ENCODE measurements at regions of chr15 and their contacts with region 1.

Region 1: GRCh38 chr15:66851226-66852071 is 149.4 kb downstream of the SMAD6 start:
- DNase-seq: peak; percentile 70
- ATAC-seq: peak; percentile 96
- H3K4me3 ChIP-seq: no peak overlapping the region
- H3K27ac ChIP-seq: peak overlapping the region; percentile 51
- H3K4me1 ChIP-seq: peaks cover 11% of the 10 kb centered on the region
- H3K27me3 ChIP-seq: no peaks in the 10 kb centered on the region
- CTCF ChIP-seq: peak; percentile 90
- POLR2A ChIP-seq: no peak
- RAD21 ChIP-seq: peak; percentile 92

Region 2: DNA sequence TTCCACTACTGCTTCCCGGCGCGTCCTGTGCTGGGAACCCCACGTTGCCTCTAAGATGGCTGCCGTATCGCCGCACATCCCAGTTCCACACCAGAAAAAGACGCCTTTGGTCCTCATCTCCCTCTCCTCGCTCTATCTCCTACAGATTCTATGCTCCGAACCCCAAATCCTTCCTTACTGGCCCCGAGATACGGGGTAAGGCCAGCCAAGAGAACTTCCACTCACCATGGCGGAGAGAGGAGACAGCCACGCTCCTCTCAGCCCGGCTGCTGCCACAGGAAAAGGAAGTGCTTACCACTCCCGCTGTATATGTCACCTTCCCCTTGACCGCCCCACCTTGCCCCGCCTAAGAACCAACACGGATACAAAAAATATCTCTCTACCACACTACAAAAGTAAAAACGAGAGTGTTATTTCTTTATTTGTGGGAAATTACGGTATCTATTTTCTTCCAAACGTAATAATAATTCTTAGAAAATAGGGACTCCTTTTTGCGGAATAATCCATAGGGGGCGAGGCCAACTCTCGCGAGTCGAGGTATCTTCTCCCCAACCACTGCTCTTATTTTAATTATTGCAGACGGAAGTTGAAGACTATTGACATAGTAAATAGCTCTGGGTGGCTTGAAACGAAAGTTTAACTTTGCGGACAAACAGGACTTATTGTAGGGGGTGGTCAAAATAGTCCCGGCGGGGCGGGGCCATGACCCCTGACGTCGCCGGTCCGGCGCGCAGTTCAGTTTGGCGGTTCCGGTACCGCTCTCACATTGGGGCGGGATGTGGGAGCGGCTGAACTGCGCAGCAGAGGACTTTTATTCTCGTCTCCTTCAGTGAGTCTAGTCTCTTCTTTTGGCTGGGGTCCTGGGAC is 346.7 kb before region 1 on chr15 and contains the starts of genes RPL4 and ZWILCH:
- CTCF ChIA-PET with region 1: no interaction called
- POLR2A ChIA-PET with region 1: no interaction called
- dilution Hi-C with region 1: no loop called
- in situ Hi-C with region 1: no loop called
- intact Hi-C with region 1: loop called (anchors 1 kb)
- DNase-seq: peak; percentile 87
- ATAC-seq: peak; percentile 87
- H3K4me3 ChIP-seq: peak within 1 kb of the TSS; percentile 59
- H3K27ac ChIP-seq: peak within 1 kb of the TSS; percentile 95
- H3K4me1 ChIP-seq: peaks cover 1% of the 10 kb centered on the region; the same call in 1 of the 2 replicates
- H3K27me3 ChIP-seq: no peaks in the 10 kb centered on the region
- CTCF ChIP-seq: no peak
- POLR2A ChIP-seq: peak; percentile 98
- RAD21 ChIP-seq: no peak
- total RNA-seq, gene RPL4: 6,510 and 13,244 TPM in 2 replicates
- total RNA-seq, gene ZWILCH: 22.2 and 28.1 TPM in 2 replicates

Region 3: GRCh38 chr15:66619151-66619903 is 232.1 kb before region 1 on chr15:
- CTCF ChIA-PET with region 1: interaction called, 11 read pairs
- POLR2A ChIA-PET with region 1: no interaction called
- dilution Hi-C with region 1: no loop called
- in situ Hi-C with region 1: no loop called
- intact Hi-C with region 1: loop called (anchors 1 kb)
- DNase-seq: peak; percentile 68
- ATAC-seq: peak; percentile 92
- H3K4me3 ChIP-seq: no peak overlapping the region
- H3K27ac ChIP-seq: no peak overlapping the region
- H3K4me1 ChIP-seq: peaks cover 15% of the 10 kb centered on the region
- H3K27me3 ChIP-seq: no peaks in the 10 kb centered on the region
- CTCF ChIP-seq: peak; percentile 94
- POLR2A ChIP-seq: no peak
- RAD21 ChIP-seq: peak; percentile 85

Region 4: GRCh38 chr15:66707310-66708082 is 144.0 kb before region 1 on chr15:
- CTCF ChIA-PET with region 1: interaction called, 17 read pairs
- POLR2A ChIA-PET with region 1: no interaction called
- dilution Hi-C with region 1: no loop called
- in situ Hi-C with region 1: loop called (anchors 25 kb)
- intact Hi-C with region 1: loop called (anchors 1 kb)
- DNase-seq: peak; percentile 43
- ATAC-seq: peak; percentile 36
- H3K4me3 ChIP-seq: no peak overlapping the region
- H3K27ac ChIP-seq: peak overlapping the region; percentile 30
- H3K4me1 ChIP-seq: peaks cover 34% of the 10 kb centered on the region
- H3K27me3 ChIP-seq: no peaks in the 10 kb centered on the region
- CTCF ChIP-seq: peak; percentile 34
- POLR2A ChIP-seq: no peak
- RAD21 ChIP-seq: peak; percentile 15; the same call in 1 of the 2 replicates

Region 5: GRCh38 chr15:66789029-66790025 is 62.1 kb before region 1 on chr15:
- CTCF ChIA-PET with region 1: interaction called, 16 read pairs
- POLR2A ChIA-PET with region 1: no interaction called
- dilution Hi-C with region 1: no loop called
- in situ Hi-C with region 1: no loop called
- intact Hi-C with region 1: loop called (anchors 1 kb)
- DNase-seq: peak; percentile 81
- ATAC-seq: peak; percentile 70
- H3K4me3 ChIP-seq: no peak overlapping the region
- H3K27ac ChIP-seq: peak overlapping the region; percentile 100
- H3K4me1 ChIP-seq: peaks cover 41% of the 10 kb centered on the region
- H3K27me3 ChIP-seq: no peaks in the 10 kb centered on the region
- CTCF ChIP-seq: peak; percentile 59
- POLR2A ChIP-seq: no peak
- RAD21 ChIP-seq: peak; percentile 57

Region 6: DNA sequence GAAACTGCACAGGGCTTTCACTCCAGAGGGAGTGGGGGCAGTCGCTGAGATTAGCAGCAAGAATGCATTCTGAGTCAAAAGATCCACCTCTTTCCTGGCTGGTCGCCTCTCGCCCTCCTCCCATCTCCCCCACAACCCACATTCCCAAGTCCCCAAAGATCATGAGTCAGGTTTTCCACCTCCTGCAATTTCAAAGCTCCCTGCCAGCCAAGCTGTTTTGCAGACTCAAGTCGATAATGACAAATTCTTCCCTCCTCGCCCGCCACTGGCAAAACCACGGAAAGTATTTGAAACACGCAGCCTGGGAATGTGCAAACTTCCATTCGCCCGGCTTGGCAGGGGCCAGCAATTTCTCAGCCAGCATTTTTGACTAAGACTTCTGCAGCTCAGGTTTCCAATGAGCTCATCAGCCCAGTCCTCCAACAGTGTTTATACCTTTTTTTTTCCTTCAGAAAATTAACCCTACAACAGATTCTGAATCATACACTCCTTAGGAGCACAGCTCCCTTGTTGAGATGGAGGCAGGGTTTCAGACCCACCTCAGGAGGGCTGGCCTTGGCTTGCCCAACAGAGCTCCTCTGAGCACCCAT is 32.0 kb after region 1 on chr15:
- CTCF ChIA-PET with region 1: no interaction called
- POLR2A ChIA-PET with region 1: no interaction called
- dilution Hi-C with region 1: no loop called
- in situ Hi-C with region 1: no loop called
- intact Hi-C with region 1: no loop called
- DNase-seq: peak; percentile 100
- ATAC-seq: peak; percentile 85
- H3K4me3 ChIP-seq: no peak overlapping the region
- H3K27ac ChIP-seq: peak overlapping the region; percentile 54
- H3K4me1 ChIP-seq: peaks cover 20% of the 10 kb centered on the region
- H3K27me3 ChIP-seq: no peaks in the 10 kb centered on the region
- CTCF ChIP-seq: 0 out of 2 replicates have a peak, but pooled peaks have one; percentile 0
- POLR2A ChIP-seq: no peak
- RAD21 ChIP-seq: no peak

Region 7: GRCh38 chr15:67024314-67024997 is 173.0 kb after region 1 on chr15:
- CTCF ChIA-PET with region 1: no interaction called
- POLR2A ChIA-PET with region 1: no interaction called
- dilution Hi-C with region 1: no loop called
- in situ Hi-C with region 1: no loop called
- intact Hi-C with region 1: no loop called
- DNase-seq: peak; percentile 97
- ATAC-seq: peak; percentile 79
- H3K4me3 ChIP-seq: no peak overlapping the region
- H3K27ac ChIP-seq: peak overlapping the region; percentile 53
- H3K4me1 ChIP-seq: peaks cover 24% of the 10 kb centered on the region
- H3K27me3 ChIP-seq: no peaks in the 10 kb centered on the region
- CTCF ChIP-seq: no peak
- POLR2A ChIP-seq: no peak
- RAD21 ChIP-seq: no peak

Measured in IMR-90 (cell line).